HepG2 (cell line): ENCODE measurements at regions of chr5 and their contacts with region 1.

Region 1: GRCh38 chr5:177317959-177318377 is 6.3 kb upstream of the MXD3 start:
- DNase-seq: peak; percentile 75
- ATAC-seq: peak; percentile 76
- H3K4me3 ChIP-seq: no peak overlapping the region
- H3K27ac ChIP-seq: peak overlapping the region; percentile 1
- H3K4me1 ChIP-seq: peaks cover 38% of the 10 kb centered on the region
- H3K27me3 ChIP-seq: no peaks in the 10 kb centered on the region
- CTCF ChIP-seq: peak; percentile 92
- EP300 ChIP-seq: peak in 1 of 2 experiments; percentile 25; a peak in 1 of 4 replicates
- POLR2A ChIP-seq: no peak
- RAD21 ChIP-seq: peak; percentile 91

Region 2: GRCh38 chr5:176965633-176966032 is 352.3 kb before region 1 on chr5:
- CTCF ChIA-PET with region 1: no interaction called
- POLR2A ChIA-PET with region 1: no interaction called
- in situ Hi-C with region 1: no loop called
- intact Hi-C with region 1: no loop called
- DNase-seq: no peak
- ATAC-seq: no peak
- H3K4me3 ChIP-seq: no peak overlapping the region
- H3K27ac ChIP-seq: no peak overlapping the region
- H3K4me1 ChIP-seq: no peaks in the 10 kb centered on the region
- H3K27me3 ChIP-seq: no peaks in the 10 kb centered on the region
- CTCF ChIP-seq: no peak
- EP300 ChIP-seq: no peak
- POLR2A ChIP-seq: no peak
- RAD21 ChIP-seq: no peak

Region 3: DNA sequence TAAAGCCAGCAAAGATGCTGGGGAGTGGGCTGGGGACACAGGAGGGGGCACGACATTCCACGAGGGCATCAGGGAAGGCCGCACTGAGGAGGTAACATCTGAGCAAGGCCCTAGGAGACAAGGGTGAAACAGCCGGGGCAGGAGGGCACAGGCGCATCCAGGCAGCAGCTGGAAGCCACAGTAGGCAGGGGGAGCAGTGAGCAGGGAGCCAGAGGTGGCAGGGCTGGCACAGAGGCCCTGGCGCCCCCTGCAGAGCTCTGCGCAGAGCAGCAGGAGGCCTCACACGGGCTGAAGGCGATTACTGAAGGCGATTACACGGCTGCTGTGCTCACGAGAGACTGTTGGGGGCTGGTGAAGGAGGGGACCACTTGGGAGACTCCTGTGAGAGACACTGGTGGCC is 18.1 kb after region 1 on chr5:
- CTCF ChIA-PET with region 1: interaction called, 38 read pairs
- POLR2A ChIA-PET with region 1: no interaction called
- in situ Hi-C with region 1: no loop called
- intact Hi-C with region 1: loop called (anchors 1 kb)
- DNase-seq: peak; percentile 50
- ATAC-seq: peak; percentile 88
- H3K4me3 ChIP-seq: no peak overlapping the region
- H3K27ac ChIP-seq: no peak overlapping the region
- H3K4me1 ChIP-seq: no peaks in the 10 kb centered on the region
- H3K27me3 ChIP-seq: no peaks in the 10 kb centered on the region
- CTCF ChIP-seq: peak; percentile 79
- EP300 ChIP-seq: no peak
- POLR2A ChIP-seq: no peak
- RAD21 ChIP-seq: peak; percentile 87

Region 4: GRCh38 chr5:177370488-177371119 is 52.6 kb after region 1 on chr5:
- CTCF ChIA-PET with region 1: interaction called, 10 read pairs
- POLR2A ChIA-PET with region 1: interaction called, 5 read pairs
- in situ Hi-C with region 1: no loop called
- intact Hi-C with region 1: loop called (anchors 5 kb)
- DNase-seq: peak; percentile 94
- ATAC-seq: peak; percentile 82
- H3K4me3 ChIP-seq: peak overlapping the region in 2 of 3 experiments; percentile 74 to 92; a peak in 3 of 6 replicates
- H3K27ac ChIP-seq: peak overlapping the region; percentile 35
- H3K4me1 ChIP-seq: peaks cover 74% of the 10 kb centered on the region
- H3K27me3 ChIP-seq: no peaks in the 10 kb centered on the region; a peak in 1 of 5 replicates
- CTCF ChIP-seq: peak; percentile 92
- EP300 ChIP-seq: no peak
- POLR2A ChIP-seq: no peak
- RAD21 ChIP-seq: peak; percentile 95

Region 5: GRCh38 chr5:177390363-177391300 is 72.7 kb after region 1 on chr5:
- CTCF ChIA-PET with region 1: interaction called, 10 read pairs
- POLR2A ChIA-PET with region 1: no interaction called
- in situ Hi-C with region 1: no loop called
- intact Hi-C with region 1: no loop called
- DNase-seq: peak; percentile 79
- ATAC-seq: peak; percentile 79
- H3K4me3 ChIP-seq: no peak overlapping the region; a peak in 1 of 6 replicates
- H3K27ac ChIP-seq: no peak overlapping the region
- H3K4me1 ChIP-seq: peaks cover 38% of the 10 kb centered on the region
- H3K27me3 ChIP-seq: peaks cover 4 to 47% of the 10 kb centered on the region in 2 experiments; a peak in 4 of 5 replicates
- CTCF ChIP-seq: peak; percentile 96
- EP300 ChIP-seq: no peak
- POLR2A ChIP-seq: no peak
- RAD21 ChIP-seq: peak; percentile 94

Region 6: GRCh38 chr5:177425801-177426565 is 108.0 kb after region 1 on chr5:
- CTCF ChIA-PET with region 1: no interaction called
- POLR2A ChIA-PET with region 1: no interaction called
- in situ Hi-C with region 1: no loop called
- intact Hi-C with region 1: no loop called
- DNase-seq: peak; percentile 100
- ATAC-seq: peak; percentile 94
- H3K4me3 ChIP-seq: peak overlapping the region; percentile 47 to 73 (median 62); a peak in 5 of 6 replicates
- H3K27ac ChIP-seq: peak overlapping the region; percentile 83
- H3K4me1 ChIP-seq: peaks cover 43% of the 10 kb centered on the region
- H3K27me3 ChIP-seq: peaks cover 0 to 14% of the 10 kb centered on the region in 2 experiments; a peak in 2 of 5 replicates
- CTCF ChIP-seq: no peak
- EP300 ChIP-seq: no peak
- POLR2A ChIP-seq: peak in 1 of 2 experiments; percentile 70; a peak in 1 of 4 replicates
- RAD21 ChIP-seq: peak; percentile 45; the same call in 1 of the 2 replicates